ENCODE measurements at regions of chr13 and their contacts with region 1.

Region 1: GRCh38 chr13:63614874-63615612 is 2199.4 kb upstream of the PCDH20 start:
- DNase-seq: no peak
- H3K4me3 Mint-ChIP-seq: no peak overlapping the region
- H3K27ac Mint-ChIP-seq: no peak overlapping the region
- H3K4me1 Mint-ChIP-seq: no peaks in the 10 kb centered on the region
- H3K27me3 Mint-ChIP-seq: no peaks in the 10 kb centered on the region

Region 2: GRCh38 chr13:63651394-63651793 is 36.4 kb after region 1 on chr13:
- intact Hi-C with region 1: loop called (anchors 1 kb)
- DNase-seq: no peak
- H3K4me3 Mint-ChIP-seq: no peak overlapping the region
- H3K27ac Mint-ChIP-seq: no peak overlapping the region
- H3K4me1 Mint-ChIP-seq: no peaks in the 10 kb centered on the region
- H3K27me3 Mint-ChIP-seq: no peaks in the 10 kb centered on the region

Region 3: DNA sequence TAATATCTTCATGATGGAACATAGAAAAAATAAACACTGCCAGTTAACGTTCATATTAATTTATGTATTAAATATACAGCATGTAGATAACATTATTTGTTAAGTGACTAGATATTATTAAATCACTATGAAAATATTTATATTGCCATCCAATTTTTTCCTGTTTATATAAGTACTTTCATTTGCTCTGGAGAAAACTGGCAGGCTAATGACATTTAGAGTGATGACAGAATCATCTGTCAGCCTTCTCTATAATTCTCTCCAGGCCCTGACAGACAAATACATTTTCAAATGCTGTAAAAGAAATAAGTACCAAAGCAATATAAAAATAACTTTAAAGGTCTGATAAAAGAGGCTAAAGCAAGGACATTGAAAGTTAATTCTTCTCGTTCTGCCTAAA is 357.3 kb after region 1 on chr13:
- intact Hi-C with region 1: no loop called
- DNase-seq: no peak
- H3K4me3 Mint-ChIP-seq: no peak overlapping the region
- H3K27ac Mint-ChIP-seq: no peak overlapping the region
- H3K4me1 Mint-ChIP-seq: no peaks in the 10 kb centered on the region
- H3K27me3 Mint-ChIP-seq: no peaks in the 10 kb centered on the region